ENCODE measurements at regions of chr6 and their contacts with region 1.

Region 1: GRCh38 chr6:151765444-151765886 is 42.0 kb upstream of the ESR1 start:
- DNase-seq: peak; percentile 37
- H3K4me3 ChIP-seq: no peak overlapping the region
- H3K27ac ChIP-seq: no peak overlapping the region
- H3K27me3 ChIP-seq: no peaks in the 10 kb centered on the region
- CTCF ChIP-seq: peak; percentile 79

Region 2: DNA sequence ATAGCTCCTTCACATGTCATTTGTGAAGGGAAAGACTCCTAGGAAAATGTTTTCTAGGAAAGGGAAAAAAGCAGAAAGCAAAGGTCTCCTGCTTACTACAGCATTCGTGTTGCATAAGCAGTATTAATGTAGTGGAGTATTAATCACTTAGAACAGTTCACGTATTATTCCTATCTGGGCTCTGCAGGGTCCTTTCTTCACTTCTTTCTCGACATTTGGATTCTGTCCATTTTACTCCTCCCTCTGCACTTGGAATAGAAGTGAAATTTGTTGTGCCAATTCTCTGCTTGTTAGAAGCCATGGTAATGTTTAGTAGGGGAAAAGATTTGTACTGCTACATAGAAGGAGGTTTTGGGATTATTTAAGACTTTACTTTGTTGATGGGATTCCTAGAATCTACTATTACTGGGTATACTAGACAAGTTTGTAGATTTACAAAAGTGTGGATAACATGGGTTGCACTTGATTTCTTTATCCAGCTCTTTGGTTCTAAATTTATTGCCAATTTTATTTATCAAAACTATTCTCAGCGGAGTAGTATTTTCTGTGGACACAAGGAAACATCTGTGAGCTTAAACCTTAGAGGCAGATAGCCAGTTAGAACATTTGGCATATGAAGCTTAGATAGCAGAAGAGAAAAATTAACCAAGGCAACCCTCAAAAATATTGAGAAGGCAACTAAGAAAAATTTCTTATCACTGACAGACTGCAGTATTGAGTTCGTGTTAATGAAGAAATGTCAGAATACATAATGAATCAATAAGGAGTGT is 66.3 kb before region 1 on chr6:
- CTCF ChIA-PET with region 1: no interaction called
- POLR2A ChIA-PET with region 1: no interaction called
- DNase-seq: no peak
- H3K4me3 ChIP-seq: no peak overlapping the region
- H3K27ac ChIP-seq: no peak overlapping the region
- H3K27me3 ChIP-seq: no peaks in the 10 kb centered on the region
- CTCF ChIP-seq: no peak

Region 3: DNA sequence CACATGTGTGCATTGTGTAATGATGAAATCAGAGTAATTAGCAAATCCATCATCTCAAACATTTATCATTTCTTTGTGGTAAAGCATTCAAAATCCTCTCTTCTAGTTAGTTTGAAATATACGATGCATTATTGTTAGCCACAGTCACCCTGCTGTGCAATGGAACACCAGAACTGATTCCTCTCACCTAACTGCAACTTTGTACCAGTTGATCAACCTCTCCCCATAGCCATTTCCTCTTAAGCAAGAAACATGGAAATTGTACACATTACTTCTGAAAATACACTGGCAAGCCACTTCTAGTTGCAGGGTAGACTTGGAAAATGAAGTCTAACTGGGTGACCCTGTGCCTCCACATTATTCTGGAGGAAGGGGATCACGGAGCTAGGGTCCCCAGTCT is 16.1 kb before region 1 on chr6:
- CTCF ChIA-PET with region 1: interaction called, 11 read pairs
- POLR2A ChIA-PET with region 1: no interaction called
- DNase-seq: no peak
- H3K4me3 ChIP-seq: no peak overlapping the region
- H3K27ac ChIP-seq: no peak overlapping the region
- H3K27me3 ChIP-seq: no peaks in the 10 kb centered on the region
- CTCF ChIP-seq: no peak

Region 4: GRCh38 chr6:152085451-152085921 is 320.0 kb after region 1 on chr6:
- CTCF ChIA-PET with region 1: no interaction called
- POLR2A ChIA-PET with region 1: no interaction called
- DNase-seq: no peak
- H3K4me3 ChIP-seq: no peak overlapping the region
- H3K27ac ChIP-seq: no peak overlapping the region
- H3K27me3 ChIP-seq: no peaks in the 10 kb centered on the region
- CTCF ChIP-seq: no peak

Region 5: DNA sequence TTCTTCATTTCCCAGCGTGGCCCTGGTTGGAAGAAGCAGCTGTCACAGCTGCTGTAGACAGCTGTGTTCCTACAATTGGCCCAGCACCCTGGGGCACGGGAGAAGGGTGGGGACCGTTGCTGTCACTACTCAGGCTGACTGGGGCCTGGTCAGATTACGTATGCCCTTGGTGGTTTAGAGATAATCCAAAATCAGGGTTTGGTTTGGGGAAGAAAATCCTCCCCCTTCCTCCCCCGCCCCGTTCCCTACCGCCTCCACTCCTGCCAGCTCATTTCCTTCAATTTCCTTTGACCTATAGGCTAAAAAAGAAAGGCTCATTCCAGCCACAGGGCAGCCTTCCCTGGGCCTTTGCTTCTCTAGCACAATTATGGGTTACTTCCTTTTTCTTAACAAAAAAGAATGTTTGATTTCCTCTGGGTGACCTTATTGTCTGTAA is 334.7 kb after region 1 on chr6:
- CTCF ChIA-PET with region 1: interaction called, 10 read pairs
- POLR2A ChIA-PET with region 1: no interaction called
- DNase-seq: no peak
- H3K4me3 ChIP-seq: no peak overlapping the region
- H3K27ac ChIP-seq: peak overlapping the region; percentile 34
- H3K27me3 ChIP-seq: no peaks in the 10 kb centered on the region
- CTCF ChIP-seq: no peak

Region 6: GRCh38 chr6:152124429-152125074 is 359.1 kb after region 1 on chr6:
- CTCF ChIA-PET with region 1: interaction called, 93 read pairs
- POLR2A ChIA-PET with region 1: no interaction called
- DNase-seq: peak; percentile 45
- H3K4me3 ChIP-seq: no peak overlapping the region
- H3K27ac ChIP-seq: no peak overlapping the region
- H3K27me3 ChIP-seq: no peaks in the 10 kb centered on the region
- CTCF ChIP-seq: peak; percentile 85

Region 7: GRCh38 chr6:152267967-152268845 is 502.7 kb after region 1 on chr6:
- CTCF ChIA-PET with region 1: interaction called, 33 read pairs
- POLR2A ChIA-PET with region 1: no interaction called
- DNase-seq: no peak
- H3K4me3 ChIP-seq: no peak overlapping the region
- H3K27ac ChIP-seq: no peak overlapping the region
- H3K27me3 ChIP-seq: no peaks in the 10 kb centered on the region
- CTCF ChIP-seq: peak; percentile 61

Measured in AG04450 (cell line).